Dorsolateral prefrontal cortex (tissue), 120 donors: ENCODE measurements at regions of chr6 and their contacts with region 1.

Region 1: GRCh38 chr6:158518191-158519127 is 41.4 kb upstream of the TMEM181 start:
- DNase-seq: peak in 9 of 10 donors; percentile 55 to 79 (median 68)
- H3K4me3 ChIP-seq: peak overlapping the region in 57 of 59 donors; percentile 1 to 65 (median 42)
- H3K27ac ChIP-seq: peak overlapping the region in 32 of 59 donors; percentile 1 to 69 (median 36)
- H3K27me3 ChIP-seq: peaks cover 0 to 8% (median 0%) of the 10 kb centered on the region in 45 donors
- CTCF ChIP-seq: peak; percentile 25 to 81 (median 64)

Region 2: DNA sequence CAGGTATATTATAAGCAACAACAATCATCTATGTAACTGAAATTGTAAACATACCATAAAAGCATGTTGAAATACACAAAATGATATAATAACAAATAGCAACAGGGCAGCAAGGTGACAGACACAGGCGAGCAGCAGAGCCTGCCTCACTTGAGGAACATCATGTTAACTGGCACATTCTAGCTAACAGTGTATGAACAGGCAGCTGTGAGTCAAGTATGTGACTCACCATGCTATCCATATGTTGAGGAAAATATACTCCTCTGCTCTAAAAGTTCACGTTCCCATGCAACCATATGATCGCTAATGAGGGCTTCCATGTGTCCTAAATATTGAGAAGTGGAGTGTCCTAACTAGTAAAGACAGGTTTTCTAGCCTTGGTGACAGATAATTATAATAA is 368.8 kb before region 1 on chr6:
- intact Hi-C with region 1: no loop called
- DNase-seq: peak in 1 of 10 donors; percentile 26
- H3K4me3 ChIP-seq: no peak overlapping the region
- H3K27ac ChIP-seq: peak overlapping the region in 3 of 59 donors; percentile 3 to 36 (median 24)
- H3K27me3 ChIP-seq: no peaks in the 10 kb centered on the region
- CTCF ChIP-seq: no peak

Region 3: GRCh38 chr6:158605266-158605878 is 86.9 kb after region 1 on chr6:
- intact Hi-C with region 1: loop called in 1 of 2 experiments (anchors 10 kb)
- DNase-seq: peak in 7 of 10 donors; percentile 59 to 83 (median 68)
- H3K4me3 ChIP-seq: no peak overlapping the region
- H3K27ac ChIP-seq: peak overlapping the region in 28 of 59 donors; percentile 1 to 69 (median 34)
- H3K27me3 ChIP-seq: no peaks in the 10 kb centered on the region
- CTCF ChIP-seq: peak; percentile 47 to 90 (median 84)

Region 4: GRCh38 chr6:158769771-158770432 is 251.4 kb after region 1 on chr6:
- intact Hi-C with region 1: no loop called
- DNase-seq: peak in 5 of 10 donors; percentile 29 to 57 (median 40)
- H3K4me3 ChIP-seq: peak overlapping the region in 3 of 59 donors; percentile 2 to 24 (median 23)
- H3K27ac ChIP-seq: peak overlapping the region in 18 of 59 donors; percentile 5 to 61 (median 48)
- H3K27me3 ChIP-seq: peaks cover 0 to 6% (median 0%) of the 10 kb centered on the region in 45 donors
- CTCF ChIP-seq: no peak